PC-9 (cell line): ENCODE measurements at regions of chr14 and their contacts with region 1.

Region 1: DNA sequence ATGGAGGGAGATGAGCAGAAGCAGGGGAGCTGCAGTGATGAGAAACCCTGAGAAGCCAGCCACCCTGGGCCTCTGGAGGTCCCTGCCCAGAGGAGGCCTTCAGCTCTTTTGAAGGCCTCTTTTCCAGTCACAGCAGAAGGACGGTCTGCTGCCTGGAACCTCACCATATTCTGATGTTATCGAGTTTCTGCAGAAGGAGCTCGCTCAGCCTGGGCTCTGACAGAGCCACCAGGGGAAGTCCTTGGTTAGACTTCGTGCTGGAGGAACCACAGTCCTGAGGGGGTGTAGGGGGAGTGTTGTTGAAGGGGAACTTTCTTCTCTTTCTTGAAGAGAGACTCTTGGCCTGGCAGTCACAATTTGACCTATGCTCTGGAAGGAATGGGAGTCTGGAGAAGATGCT is 25.1 kb upstream of the BATF start:
- DNase-seq: no peak
- H3K4me3 ChIP-seq: no peak overlapping the region
- H3K27ac ChIP-seq: no peak overlapping the region
- H3K4me1 ChIP-seq: peaks cover 4% of the 10 kb centered on the region; the same call in 1 of the 2 replicates
- H3K27me3 ChIP-seq: no peaks in the 10 kb centered on the region
- CTCF ChIP-seq: no peak

Region 2: GRCh38 chr14:75993567-75994041 is 496.4 kb after region 1 on chr14:
- CTCF ChIA-PET with region 1: no interaction called
- POLR2A ChIA-PET with region 1: interaction called, 20 read pairs
- intact Hi-C with region 1: no loop called
- DNase-seq: no peak
- H3K4me3 ChIP-seq: no peak overlapping the region
- H3K27ac ChIP-seq: no peak overlapping the region
- H3K4me1 ChIP-seq: no peaks in the 10 kb centered on the region
- H3K27me3 ChIP-seq: no peaks in the 10 kb centered on the region
- CTCF ChIP-seq: no peak